ENCODE measurements at regions of chr20 and their contacts with region 1.

Region 1: GRCh38 chr20:51265361-51265760 is 242.5 kb upstream of the KCNG1 start:
- DNase-seq: peak; percentile 1
- ATAC-seq: no peak
- H3K4me3 ChIP-seq: no peak overlapping the region
- H3K27ac ChIP-seq: no peak overlapping the region
- H3K4me1 ChIP-seq: no peaks in the 10 kb centered on the region
- H3K27me3 ChIP-seq: peaks cover 25% of the 10 kb centered on the region
- CTCF ChIP-seq: no peak
- POLR2A ChIP-seq: no peak
- RAD21 ChIP-seq: no peak

Region 2: GRCh38 chr20:51206032-51206662 is 59.2 kb before region 1 on chr20:
- CTCF ChIA-PET with region 1: no interaction called
- POLR2A ChIA-PET with region 1: no interaction called
- dilution Hi-C with region 1: no loop called
- in situ Hi-C with region 1: no loop called
- intact Hi-C with region 1: loop called (anchors 10 kb)
- DNase-seq: no peak
- ATAC-seq: no peak
- H3K4me3 ChIP-seq: no peak overlapping the region
- H3K27ac ChIP-seq: no peak overlapping the region
- H3K4me1 ChIP-seq: no peaks in the 10 kb centered on the region; the same call in 1 of the 2 replicates
- H3K27me3 ChIP-seq: peaks cover 19% of the 10 kb centered on the region
- CTCF ChIP-seq: no peak
- POLR2A ChIP-seq: no peak
- RAD21 ChIP-seq: no peak

Measured in IMR-90 (cell line).